PC-3 (cell line): ENCODE measurements at regions of chr3 and their contacts with region 1.

Region 1: GRCh38 chr3:158801696-158802408 is at the start of gene MFSD1:
- DNase-seq: peak; percentile 86
- ATAC-seq: peak; percentile 73
- H3K4me3 ChIP-seq: peak within 1 kb of the TSS; percentile 94
- H3K27ac ChIP-seq: peak within 1 kb of the TSS; percentile 71
- H3K4me1 ChIP-seq: peaks cover 33% of the 10 kb centered on the region
- H3K27me3 ChIP-seq: no peaks in the 10 kb centered on the region
- CTCF ChIP-seq: no peak
- total RNA-seq, gene MFSD1: 45.2 and 45.3 TPM in 2 replicates

Region 2: DNA sequence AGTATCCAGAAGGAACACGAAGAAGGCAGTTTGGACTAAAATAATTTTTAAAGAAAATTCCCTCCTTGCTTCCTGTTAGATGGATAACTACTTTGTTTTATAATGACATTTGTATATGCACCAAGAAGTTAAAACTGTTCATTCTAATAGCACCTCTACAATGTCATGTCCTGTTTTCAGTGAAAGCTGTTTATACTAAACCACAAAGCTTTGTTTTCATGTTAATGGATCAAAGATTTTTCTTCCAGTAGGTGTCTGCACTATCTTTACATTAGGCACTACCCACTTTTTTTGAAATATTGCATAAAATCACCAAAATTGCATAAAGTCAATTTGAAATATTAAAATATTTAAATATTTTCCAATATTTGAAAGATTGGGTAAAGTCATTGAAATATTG is 79.7 kb before region 1 on chr3:
- CTCF ChIA-PET with region 1: interaction called, 11 read pairs
- POLR2A ChIA-PET with region 1: no interaction called
- intact Hi-C with region 1: no loop called
- DNase-seq: no peak
- ATAC-seq: no peak
- H3K4me3 ChIP-seq: no peak overlapping the region
- H3K27ac ChIP-seq: peak overlapping the region; percentile 100
- H3K4me1 ChIP-seq: peaks cover 59% of the 10 kb centered on the region
- H3K27me3 ChIP-seq: no peaks in the 10 kb centered on the region
- CTCF ChIP-seq: no peak

Region 3: GRCh38 chr3:158830391-158830790 is 28.5 kb after region 1 on chr3:
- CTCF ChIA-PET with region 1: no interaction called
- POLR2A ChIA-PET with region 1: no interaction called
- intact Hi-C with region 1: loop called (anchors 1 kb)
- DNase-seq: peak; percentile 69
- ATAC-seq: peak; percentile 81
- H3K4me3 ChIP-seq: no peak overlapping the region
- H3K27ac ChIP-seq: peak overlapping the region; percentile 83
- H3K4me1 ChIP-seq: peaks cover 8% of the 10 kb centered on the region; the same call in 1 of the 2 replicates
- H3K27me3 ChIP-seq: no peaks in the 10 kb centered on the region
- CTCF ChIP-seq: no peak